Naive thymus-derived CD4-positive, alpha-beta T cell (primary cell): ENCODE measurements at regions of chr12 and their contacts with region 1.

Region 1: GRCh38 chr12:15532364-15532977 is 210.2 kb downstream of the PTPRO start:
- DNase-seq: peak; percentile 12 to 80 (median 69)
- ATAC-seq: peak; percentile 86
- H3K4me3 ChIP-seq: peak overlapping the region; percentile 4
- H3K4me3 Mint-ChIP-seq: peak overlapping the region in 8 of 10 donors; percentile 0 to 62 (median 40)
- H3K27ac ChIP-seq: no peak overlapping the region
- H3K27ac Mint-ChIP-seq: peak overlapping the region in 6 of 9 donors; percentile 28 to 92 (median 80)
- H3K4me1 ChIP-seq: peaks cover 0 to 33% of the 10 kb centered on the region in 2 donors
- H3K4me1 Mint-ChIP-seq: peaks cover 0 to 13% (median under 1%) of the 10 kb centered on the region in 7 donors
- H3K27me3 ChIP-seq: no peaks in the 10 kb centered on the region
- H3K27me3 Mint-ChIP-seq: peaks cover 0 to 24% (median 0%) of the 10 kb centered on the region in 5 donors

Region 2: DNA sequence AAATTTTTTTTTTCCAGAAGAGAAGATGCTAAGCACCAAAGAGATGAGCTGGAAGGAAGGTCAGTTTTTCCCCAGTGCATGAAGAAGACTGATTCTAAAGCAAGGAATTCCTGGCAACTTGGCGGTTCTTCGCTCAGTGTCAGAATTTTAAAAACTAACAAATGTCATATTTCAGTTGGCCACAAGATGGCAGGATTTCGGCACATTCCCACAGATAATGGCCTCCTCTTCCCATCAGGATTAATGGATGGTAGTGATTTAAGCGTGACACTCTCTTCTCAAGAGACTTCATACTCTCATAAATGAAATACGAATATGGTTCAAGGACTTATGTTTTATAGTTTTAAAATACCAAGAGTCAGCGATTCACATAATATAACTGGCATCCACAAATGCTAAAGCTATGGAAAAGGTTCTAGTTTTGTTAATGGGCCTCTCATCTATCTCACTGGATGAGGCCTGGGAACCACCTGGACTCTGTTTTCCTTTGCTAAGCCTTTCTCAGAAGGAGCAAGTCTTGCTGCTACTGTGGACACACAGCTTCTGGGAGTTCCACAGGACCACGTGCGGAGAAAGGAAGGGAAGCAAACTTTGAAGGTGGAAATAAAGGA is 256.3 kb before region 1 on chr12:
- CTCF ChIA-PET with region 1: interaction called, 5 read pairs
- POLR2A ChIA-PET with region 1: no interaction called
- intact Hi-C with region 1: loop called in 1 of 2 experiments (anchors 2 kb)
- DNase-seq: peak in 2 of 9 donors; percentile 5 to 13
- ATAC-seq: no peak
- H3K4me3 ChIP-seq: no peak overlapping the region
- H3K4me3 Mint-ChIP-seq: no peak overlapping the region
- H3K27ac ChIP-seq: no peak overlapping the region
- H3K27ac Mint-ChIP-seq: no peak overlapping the region
- H3K4me1 ChIP-seq: no peaks in the 10 kb centered on the region
- H3K4me1 Mint-ChIP-seq: peaks cover 0 to 10% (median 0%) of the 10 kb centered on the region in 7 donors
- H3K27me3 ChIP-seq: no peaks in the 10 kb centered on the region
- H3K27me3 Mint-ChIP-seq: peaks cover 0 to 18% (median 15%) of the 10 kb centered on the region in 5 donors

Region 3: GRCh38 chr12:15563663-15564062 is 31.2 kb after region 1 on chr12:
- CTCF ChIA-PET with region 1: interaction called, 72 read pairs
- POLR2A ChIA-PET with region 1: interaction called, 730 read pairs
- intact Hi-C with region 1: loop called (anchors 1 kb)
- DNase-seq: peak in 6 of 9 donors; percentile 39 to 54 (median 50)
- ATAC-seq: peak; percentile 84
- H3K4me3 ChIP-seq: peak overlapping the region; percentile 38
- H3K4me3 Mint-ChIP-seq: peak overlapping the region; percentile 54 to 87 (median 82)
- H3K27ac ChIP-seq: peak overlapping the region; percentile 82
- H3K27ac Mint-ChIP-seq: peak overlapping the region; percentile 87 to 96 (median 94)
- H3K4me1 ChIP-seq: peaks cover 0 to 37% of the 10 kb centered on the region in 2 donors
- H3K4me1 Mint-ChIP-seq: peaks cover 36 to 89% (median 77%) of the 10 kb centered on the region in 7 donors
- H3K27me3 ChIP-seq: no peaks in the 10 kb centered on the region
- H3K27me3 Mint-ChIP-seq: peaks cover 0 to 5% (median 0%) of the 10 kb centered on the region in 5 donors

Region 4: DNA sequence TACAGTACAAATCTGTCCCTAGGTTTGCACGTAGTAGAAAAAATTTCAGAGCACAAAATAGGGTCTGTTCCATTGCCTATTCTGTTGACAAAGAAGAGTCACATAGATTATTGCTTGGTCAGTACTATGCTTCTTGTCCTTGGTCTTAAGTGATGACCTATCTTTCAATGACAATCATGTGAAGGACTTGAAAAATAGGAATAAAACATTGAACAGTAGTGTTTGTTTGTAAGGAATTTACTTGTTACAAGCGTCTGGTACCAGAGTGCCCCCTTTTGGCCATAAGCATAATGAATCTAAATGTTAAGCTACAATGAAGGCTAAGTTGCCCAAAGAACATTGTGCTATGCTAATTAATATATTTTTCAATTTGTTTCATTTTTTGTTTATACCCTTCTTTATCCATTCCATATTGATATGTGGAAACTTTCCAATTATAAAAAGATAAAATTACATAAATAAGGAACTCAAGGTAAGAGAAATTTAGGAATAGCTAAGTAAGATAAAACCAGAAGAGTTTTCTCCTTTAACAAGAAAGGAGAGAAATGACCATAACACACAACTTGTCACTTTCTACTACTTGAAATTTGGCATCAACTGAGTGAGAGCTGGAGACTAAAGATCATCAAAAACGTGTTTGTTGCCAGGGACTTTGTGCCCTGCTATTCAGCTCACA is 52.0 kb after region 1 on chr12:
- CTCF ChIA-PET with region 1: interaction called, 405 read pairs
- POLR2A ChIA-PET with region 1: interaction called, 24 read pairs
- intact Hi-C with region 1: loop called (anchors 1 kb)
- DNase-seq: peak in 7 of 9 donors; percentile 40 to 65 (median 56)
- ATAC-seq: peak; percentile 78
- H3K4me3 ChIP-seq: no peak overlapping the region
- H3K4me3 Mint-ChIP-seq: no peak overlapping the region
- H3K27ac ChIP-seq: no peak overlapping the region
- H3K27ac Mint-ChIP-seq: no peak overlapping the region
- H3K4me1 ChIP-seq: peaks cover 0 to 4% of the 10 kb centered on the region in 2 donors
- H3K4me1 Mint-ChIP-seq: peaks cover 1 to 21% (median 15%) of the 10 kb centered on the region in 7 donors
- H3K27me3 ChIP-seq: no peaks in the 10 kb centered on the region
- H3K27me3 Mint-ChIP-seq: peaks cover 0 to 3% (median 0%) of the 10 kb centered on the region in 5 donors

Region 5: DNA sequence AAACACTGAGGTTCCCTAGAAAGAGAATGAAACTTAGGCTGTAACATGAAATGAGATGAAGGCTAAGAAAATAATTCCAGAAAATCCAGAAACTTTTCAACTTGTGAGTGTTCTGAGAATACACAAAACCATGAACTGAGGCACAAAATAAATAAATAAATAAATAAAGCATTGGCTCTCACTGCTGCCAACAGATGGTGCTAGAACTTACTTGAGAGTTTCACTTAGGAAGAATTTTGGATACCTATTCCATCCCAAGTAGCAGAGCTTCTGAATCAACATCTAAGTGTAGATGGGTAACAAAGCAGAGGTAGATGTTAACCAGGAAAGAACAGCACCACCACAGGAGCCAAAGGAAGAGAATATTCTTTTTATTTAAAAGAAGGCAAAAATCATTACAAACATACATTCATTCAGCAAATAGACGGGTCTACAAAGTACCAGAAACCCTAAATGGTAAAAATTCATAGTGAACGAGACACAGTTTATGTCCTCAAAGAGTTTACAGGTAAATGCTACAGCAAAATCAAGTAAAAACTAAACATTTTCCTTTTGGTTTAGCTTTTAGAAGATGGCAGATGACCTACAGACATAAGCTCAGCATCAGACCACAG is 240.0 kb after region 1 on chr12:
- CTCF ChIA-PET with region 1: interaction called, 3 read pairs
- POLR2A ChIA-PET with region 1: no interaction called
- intact Hi-C with region 1: loop called in 1 of 2 experiments (anchors 5 kb)
- DNase-seq: peak in 1 of 9 donors; percentile 11
- ATAC-seq: no peak
- H3K4me3 ChIP-seq: no peak overlapping the region
- H3K4me3 Mint-ChIP-seq: no peak overlapping the region
- H3K27ac ChIP-seq: no peak overlapping the region
- H3K27ac Mint-ChIP-seq: no peak overlapping the region
- H3K4me1 ChIP-seq: no peaks in the 10 kb centered on the region
- H3K4me1 Mint-ChIP-seq: no peaks in the 10 kb centered on the region
- H3K27me3 ChIP-seq: no peaks in the 10 kb centered on the region
- H3K27me3 Mint-ChIP-seq: peaks cover 10 to 23% (median 15%) of the 10 kb centered on the region in 5 donors

Region 6: DNA sequence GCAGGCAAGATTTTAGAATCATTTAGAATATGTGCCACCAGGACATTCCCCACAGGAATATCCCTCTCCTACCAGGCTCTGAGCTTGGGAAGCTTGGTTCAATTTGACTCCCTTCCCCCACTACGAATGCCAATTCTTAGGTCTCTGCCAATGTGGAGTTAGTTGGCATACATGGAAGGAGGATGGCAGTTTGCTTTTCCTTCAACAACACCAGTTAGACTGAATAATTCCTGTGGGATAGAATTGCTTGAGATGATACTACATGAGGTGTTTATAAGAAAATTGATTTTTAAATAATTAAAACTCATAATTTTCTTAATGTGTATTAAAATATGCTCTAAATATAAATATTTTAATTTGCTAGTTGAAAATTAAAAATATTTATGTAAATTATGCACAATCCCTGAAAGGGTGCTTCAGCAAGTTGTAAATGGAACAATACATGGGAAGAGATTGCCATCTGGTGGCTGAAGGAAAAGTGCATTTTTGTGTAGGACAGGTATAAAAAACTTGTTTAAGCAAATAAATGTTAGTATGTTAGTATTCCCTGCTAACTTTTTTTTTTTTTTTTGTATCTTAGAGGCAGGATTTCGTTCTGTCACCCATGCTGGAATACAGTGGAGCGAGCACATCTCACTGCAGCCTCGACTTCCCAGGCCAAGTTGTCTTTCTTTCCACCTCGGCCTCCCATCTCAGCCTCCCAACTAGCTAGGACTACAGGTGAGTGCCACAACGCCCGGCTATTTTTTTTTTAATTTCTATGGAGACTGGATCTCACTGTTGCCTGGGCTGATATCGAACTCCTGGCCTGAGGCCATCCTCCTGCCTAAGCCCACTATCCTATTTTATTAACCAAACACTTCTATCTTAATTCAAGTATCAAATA is 323.9 kb after region 1 on chr12:
- CTCF ChIA-PET with region 1: interaction called, 4 read pairs
- POLR2A ChIA-PET with region 1: interaction called, 3 read pairs
- intact Hi-C with region 1: loop called (anchors 1 kb)
- DNase-seq: peak in 7 of 9 donors; percentile 45 to 72 (median 64)
- ATAC-seq: peak; percentile 60
- H3K4me3 ChIP-seq: no peak overlapping the region
- H3K4me3 Mint-ChIP-seq: no peak overlapping the region
- H3K27ac ChIP-seq: no peak overlapping the region
- H3K27ac Mint-ChIP-seq: no peak overlapping the region
- H3K4me1 ChIP-seq: no peaks in the 10 kb centered on the region
- H3K4me1 Mint-ChIP-seq: no peaks in the 10 kb centered on the region
- H3K27me3 ChIP-seq: no peaks in the 10 kb centered on the region
- H3K27me3 Mint-ChIP-seq: peaks cover 7 to 35% (median 13%) of the 10 kb centered on the region in 5 donors

Region 7: GRCh38 chr12:15899282-15899870 is 366.9 kb after region 1 on chr12:
- CTCF ChIA-PET with region 1: interaction called, 3 read pairs
- POLR2A ChIA-PET with region 1: no interaction called
- intact Hi-C with region 1: loop called in 1 of 2 experiments (anchors 5 kb)
- DNase-seq: peak in 5 of 9 donors; percentile 22 to 32 (median 31)
- ATAC-seq: peak; percentile 72
- H3K4me3 ChIP-seq: no peak overlapping the region
- H3K4me3 Mint-ChIP-seq: no peak overlapping the region
- H3K27ac ChIP-seq: no peak overlapping the region
- H3K27ac Mint-ChIP-seq: peak overlapping the region in 6 of 9 donors; percentile 25 to 74 (median 53)
- H3K4me1 ChIP-seq: no peaks in the 10 kb centered on the region
- H3K4me1 Mint-ChIP-seq: peaks cover 0 to 13% (median 7%) of the 10 kb centered on the region in 7 donors
- H3K27me3 ChIP-seq: no peaks in the 10 kb centered on the region
- H3K27me3 Mint-ChIP-seq: no peaks in the 10 kb centered on the region